ENCODE measurements at regions of chr12 and their contacts with region 1.

Region 1: GRCh38 chr12:121443193-121443870 is 43.4 kb downstream of the RNF34 start:
- DNase-seq: peak; percentile 86 to 94 (median 93)
- ATAC-seq: peak; percentile 88 to 90
- H3K4me3 ChIP-seq: no peak overlapping the region
- H3K27ac ChIP-seq: no peak overlapping the region
- H3K4me1 ChIP-seq: no peaks in the 10 kb centered on the region
- H3K27me3 ChIP-seq: no peaks in the 10 kb centered on the region

Region 2: GRCh38 chr12:121287267-121287954 is 155.9 kb before region 1 on chr12:
- intact Hi-C with region 1: no loop called
- DNase-seq: peak in 1 of 3 donors; percentile 30
- ATAC-seq: no peak
- H3K4me3 ChIP-seq: no peak overlapping the region
- H3K27ac ChIP-seq: no peak overlapping the region
- H3K4me1 ChIP-seq: peaks cover 3% of the 10 kb centered on the region
- H3K27me3 ChIP-seq: no peaks in the 10 kb centered on the region

Region 3: DNA sequence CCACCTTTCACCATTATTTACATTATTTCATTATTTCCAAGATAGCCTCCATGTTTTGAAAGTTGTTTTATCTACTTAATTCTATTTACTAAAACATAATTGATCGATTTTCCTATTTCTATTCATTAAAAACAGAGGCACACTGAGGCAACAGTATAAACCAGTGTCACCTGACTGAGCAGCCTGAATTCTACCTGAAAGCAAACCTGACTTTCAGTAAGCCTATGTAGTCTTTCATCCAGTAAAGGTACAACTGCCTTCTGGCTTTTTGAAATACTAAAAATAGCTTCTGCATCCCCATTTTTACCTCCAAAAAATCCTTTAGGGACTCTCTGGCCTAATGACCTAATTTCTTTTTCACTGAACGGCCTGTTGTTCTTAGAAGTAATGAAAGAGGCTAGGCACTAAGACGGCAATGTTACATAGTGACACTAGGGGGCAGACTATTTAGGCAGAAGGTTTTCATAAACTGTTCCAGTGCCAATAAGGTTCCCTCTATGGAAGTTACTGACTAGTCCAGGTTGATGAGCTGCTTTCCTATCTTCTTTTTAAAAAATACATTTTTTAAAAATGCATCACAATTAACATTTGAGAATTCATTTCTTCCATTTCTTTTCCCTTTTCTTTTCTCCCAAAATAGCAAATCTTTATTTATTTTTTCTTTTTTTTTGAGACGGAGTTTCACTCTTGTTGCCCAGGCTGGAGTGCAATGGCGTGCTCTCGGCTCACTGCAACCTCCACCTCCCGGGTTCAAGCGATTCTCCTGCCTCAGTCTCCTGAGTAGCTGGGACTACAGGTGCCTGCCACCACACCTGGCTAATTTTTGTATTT is 108.6 kb before region 1 on chr12:
- intact Hi-C with region 1: loop called in 3 of 4 experiments (anchors 5 to 10 kb)
- DNase-seq: no peak
- ATAC-seq: peak; percentile 74 to 86
- H3K4me3 ChIP-seq: no peak overlapping the region
- H3K27ac ChIP-seq: no peak overlapping the region
- H3K4me1 ChIP-seq: no peaks in the 10 kb centered on the region
- H3K27me3 ChIP-seq: no peaks in the 10 kb centered on the region

Region 4: DNA sequence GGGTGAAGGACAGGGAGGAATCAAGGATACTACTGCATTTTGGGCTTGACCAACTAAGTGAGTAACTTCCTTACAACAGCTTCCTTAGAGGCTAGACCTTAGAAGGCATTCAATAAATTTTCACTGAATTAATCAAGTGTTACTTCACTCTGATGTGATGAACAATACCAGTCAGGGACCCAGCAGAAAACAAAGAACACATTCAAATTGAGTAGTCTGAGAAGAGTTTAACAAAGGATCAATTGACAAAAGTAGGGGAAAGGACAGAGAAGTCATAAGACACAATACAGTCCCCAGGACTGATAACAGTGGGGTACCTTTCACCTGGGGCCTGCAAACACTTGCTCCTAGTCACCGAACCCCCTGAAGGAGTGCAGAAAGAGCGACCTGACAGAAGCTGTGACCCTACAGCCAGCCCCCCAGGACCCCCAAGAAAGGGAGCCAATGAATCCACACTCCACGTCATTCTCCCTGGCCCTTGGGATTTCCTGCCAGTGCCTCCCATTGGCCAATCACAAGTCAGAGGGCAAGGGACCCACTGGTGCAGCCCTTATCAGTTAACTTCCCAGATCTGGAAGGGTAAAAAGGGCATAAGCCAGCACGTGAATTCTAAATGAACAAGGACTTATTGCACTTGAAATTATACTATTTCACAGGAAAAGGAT is 98.0 kb before region 1 on chr12:
- intact Hi-C with region 1: loop called in 1 of 4 experiments (anchors 10 kb)
- DNase-seq: no peak
- ATAC-seq: no peak
- H3K4me3 ChIP-seq: no peak overlapping the region
- H3K27ac ChIP-seq: no peak overlapping the region
- H3K4me1 ChIP-seq: no peaks in the 10 kb centered on the region
- H3K27me3 ChIP-seq: no peaks in the 10 kb centered on the region

Measured in right cardiac atrium (tissue), 5 donors.